Activated T-helper 2 cell treated with anti-CD3 and anti-CD28 coated beads, Interferon-gamma antibody, Interleukin-2, Interleukin-4, amounts not matched to agents 10 μg/mL and 5 μg/mL and 100 μg/mL, durations not matched to agents 14 hours and 24 hours and 36 hours (primary cell): ENCODE measurements at regions of chr5 and their contacts with region 1.

Region 1: GRCh38 chr5:56050551-56051255 is 55.9 kb upstream of the IL6ST start:
- DNase-seq: no peak
- H3K4me3 Mint-ChIP-seq: peak overlapping the region; percentile 23
- H3K27ac Mint-ChIP-seq: peak overlapping the region; percentile 17
- H3K4me1 Mint-ChIP-seq: peaks cover 27% of the 10 kb centered on the region
- H3K27me3 Mint-ChIP-seq: peaks cover 31% of the 10 kb centered on the region

Region 2: DNA sequence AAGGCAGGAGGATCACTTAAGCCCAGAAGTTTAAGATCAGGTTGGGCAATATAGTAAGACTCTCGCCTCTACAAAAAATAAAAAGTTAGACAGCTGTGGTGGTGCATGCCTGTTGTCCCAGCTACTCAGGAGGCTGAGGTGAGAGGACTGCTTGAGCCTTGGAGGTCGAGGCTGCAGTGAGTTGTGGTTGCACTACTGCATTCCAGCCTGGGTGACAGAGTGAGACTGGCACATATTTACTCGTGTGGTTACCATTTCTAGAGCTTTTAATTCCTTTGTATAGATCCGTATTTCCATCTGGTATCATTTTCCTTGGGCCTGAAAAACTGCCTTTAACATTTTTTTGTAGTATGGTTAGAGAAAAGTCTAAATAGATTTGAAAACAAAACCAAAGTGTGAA is 63.8 kb before region 1 on chr5:
- intact Hi-C with region 1: no loop called
- DNase-seq: no peak
- H3K4me3 Mint-ChIP-seq: no peak overlapping the region
- H3K27ac Mint-ChIP-seq: no peak overlapping the region
- H3K4me1 Mint-ChIP-seq: peaks cover 73% of the 10 kb centered on the region
- H3K27me3 Mint-ChIP-seq: no peaks in the 10 kb centered on the region

Region 3: DNA sequence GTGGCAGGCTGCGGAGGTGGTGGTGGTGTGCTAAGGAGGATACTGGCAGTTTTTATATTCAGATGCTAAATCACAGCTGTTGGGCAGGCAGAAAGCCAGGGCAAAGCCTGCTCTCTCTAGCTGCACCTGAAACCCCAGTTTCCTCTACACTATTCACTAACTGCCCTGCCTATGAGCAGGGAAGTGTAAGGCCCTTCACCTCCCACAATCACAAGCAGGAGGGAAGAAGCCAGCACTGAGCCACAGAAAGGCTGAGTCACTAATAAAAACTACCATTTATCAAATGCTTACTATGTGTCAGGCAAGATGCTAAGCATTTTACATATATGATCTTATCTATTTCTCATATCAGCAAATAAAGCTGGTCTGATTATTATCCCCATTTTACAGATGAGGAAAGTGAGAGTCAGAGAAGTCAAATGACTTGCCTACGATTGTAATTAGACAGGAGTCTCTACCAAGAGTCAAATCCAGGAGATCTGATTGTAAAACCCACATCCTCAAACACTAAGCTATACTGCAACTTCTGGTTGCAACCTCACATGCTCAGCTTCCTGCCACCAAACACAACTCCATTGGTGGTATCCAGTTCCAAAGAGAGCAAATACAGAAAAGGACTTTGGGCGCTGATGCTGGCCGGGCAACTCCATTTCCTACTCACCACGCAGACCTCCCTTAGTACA is 38.3 kb before region 1 on chr5:
- intact Hi-C with region 1: loop called (anchors 1 kb)
- DNase-seq: peak; percentile 57
- H3K4me3 Mint-ChIP-seq: peak overlapping the region; percentile 19
- H3K27ac Mint-ChIP-seq: peak overlapping the region; percentile 86
- H3K4me1 Mint-ChIP-seq: peaks cover 29% of the 10 kb centered on the region
- H3K27me3 Mint-ChIP-seq: peaks cover 5% of the 10 kb centered on the region

Region 4: DNA sequence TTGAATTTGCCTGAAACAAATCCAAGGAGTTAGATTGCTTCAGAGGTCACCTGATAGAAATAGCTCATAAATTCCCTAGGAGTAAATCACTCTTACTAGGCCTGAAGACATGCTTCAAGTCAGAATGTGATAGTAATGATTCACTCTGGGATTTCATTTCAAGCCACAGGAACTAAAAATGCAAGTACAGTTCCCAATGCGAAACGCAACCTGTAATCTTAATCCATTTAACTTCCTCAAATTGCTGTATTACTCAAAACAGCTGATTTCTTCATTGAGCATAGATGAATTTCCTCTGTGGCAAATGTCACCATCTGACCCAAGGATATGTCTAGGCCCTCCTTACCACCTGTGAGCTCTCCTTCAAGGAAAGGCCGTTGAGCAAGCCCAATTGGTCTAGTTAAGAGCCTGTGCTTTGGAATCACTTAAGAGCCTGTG is 23.8 kb before region 1 on chr5:
- intact Hi-C with region 1: loop called (anchors 1 kb)
- DNase-seq: no peak
- H3K4me3 Mint-ChIP-seq: no peak overlapping the region
- H3K27ac Mint-ChIP-seq: no peak overlapping the region
- H3K4me1 Mint-ChIP-seq: peaks cover 22% of the 10 kb centered on the region
- H3K27me3 Mint-ChIP-seq: peaks cover 39% of the 10 kb centered on the region

Region 5: GRCh38 chr5:56064984-56065383 is 14.3 kb after region 1 on chr5:
- intact Hi-C with region 1: loop called (anchors 2 kb)
- DNase-seq: no peak
- H3K4me3 Mint-ChIP-seq: no peak overlapping the region
- H3K27ac Mint-ChIP-seq: no peak overlapping the region
- H3K4me1 Mint-ChIP-seq: peaks cover 29% of the 10 kb centered on the region
- H3K27me3 Mint-ChIP-seq: peaks cover 38% of the 10 kb centered on the region

Region 6: DNA sequence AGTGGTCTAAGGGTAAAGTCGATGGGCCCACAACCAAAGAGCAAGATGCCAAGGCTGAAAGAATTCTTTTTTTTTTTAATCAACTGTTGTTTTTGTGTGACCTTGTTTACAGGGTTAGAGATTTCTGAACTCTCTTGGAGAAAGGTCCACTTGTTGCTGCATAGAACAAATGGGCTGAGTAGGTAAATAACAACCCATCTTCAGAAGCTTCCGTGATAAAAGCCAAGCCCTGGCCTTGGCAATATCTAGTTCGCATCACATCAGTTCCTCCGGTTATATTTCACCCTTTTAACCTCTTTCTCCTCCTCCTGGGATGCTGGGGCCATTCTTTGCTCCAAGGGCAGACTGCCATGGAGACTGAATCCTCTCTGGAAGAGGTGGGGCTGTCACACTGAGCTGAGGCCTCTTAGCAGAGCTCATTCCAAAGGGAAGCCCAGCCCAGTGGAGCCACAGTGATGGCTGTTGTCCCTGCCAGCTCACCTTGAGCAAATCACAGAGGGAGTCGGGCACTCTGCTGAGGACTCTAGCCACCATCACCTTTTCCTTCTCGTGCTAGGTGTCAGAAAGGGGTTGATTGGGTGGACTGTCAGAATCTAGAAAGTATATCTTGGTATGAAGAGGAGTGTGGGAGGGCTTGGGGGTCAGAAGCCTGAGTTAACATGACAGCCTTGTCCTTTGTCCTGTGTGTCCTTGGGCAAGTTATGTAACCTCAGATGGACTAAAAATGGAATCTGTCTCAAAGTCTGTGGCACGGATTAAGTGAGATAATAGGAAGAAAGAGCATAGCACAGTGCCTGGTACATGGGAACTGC is 164.5 kb after region 1 on chr5:
- intact Hi-C with region 1: no loop called
- DNase-seq: no peak
- H3K4me3 Mint-ChIP-seq: no peak overlapping the region
- H3K27ac Mint-ChIP-seq: no peak overlapping the region
- H3K4me1 Mint-ChIP-seq: no peaks in the 10 kb centered on the region
- H3K27me3 Mint-ChIP-seq: no peaks in the 10 kb centered on the region